ENCODE measurements at regions of chr3 and their contacts with region 1.

Region 1: GRCh38 chr3:112437146-112438022 is 61.9 kb downstream of the BTLA start:
- DNase-seq: no peak
- ATAC-seq: no peak

Region 2: DNA sequence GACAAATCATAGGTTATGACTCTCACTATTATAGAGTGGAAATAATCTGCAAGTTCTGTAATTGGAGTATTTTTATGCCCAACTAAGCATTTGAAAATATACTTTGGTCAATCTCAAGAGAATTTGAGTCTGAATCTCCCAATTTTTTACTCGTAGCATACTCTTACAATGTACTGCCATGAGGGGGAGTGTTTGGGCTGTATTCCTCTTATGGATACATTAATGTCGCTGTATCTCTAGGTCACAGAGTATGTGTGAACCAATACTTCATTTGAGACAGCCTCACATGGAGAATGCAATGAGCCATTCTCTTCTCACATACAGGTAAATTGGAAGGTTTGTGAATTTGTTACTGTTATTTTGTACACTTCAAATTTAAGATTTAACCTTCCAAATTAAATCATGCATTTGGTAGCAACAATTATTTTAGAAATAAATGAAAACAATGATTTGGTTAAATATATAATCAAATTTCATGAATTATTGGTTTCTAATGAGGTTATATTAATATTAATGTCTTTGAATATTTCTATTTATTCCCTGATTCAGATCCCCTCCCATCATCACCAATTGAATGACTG is 109.9 kb before region 1 on chr3:
- intact Hi-C with region 1: loop called (anchors 10 kb)
- DNase-seq: no peak
- ATAC-seq: peak; percentile 78

Region 3: DNA sequence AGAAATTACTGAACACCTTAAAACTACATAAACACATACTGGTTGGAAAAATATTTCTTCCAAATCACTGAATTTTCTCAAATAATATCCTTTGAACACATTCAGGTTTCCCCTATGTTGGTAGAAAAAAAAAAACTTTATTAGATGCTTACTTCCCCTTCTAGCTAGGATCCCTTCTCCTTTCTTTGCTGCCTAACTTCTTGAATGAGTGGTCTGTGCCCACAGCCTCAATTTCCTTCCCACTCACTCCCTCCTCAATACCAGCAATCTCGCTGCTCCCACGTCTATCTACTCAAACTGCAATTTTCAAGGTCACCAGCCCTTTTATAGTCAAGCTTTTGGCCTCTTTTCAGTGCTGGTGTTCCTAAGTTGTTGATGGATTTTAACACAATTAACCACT is 529.2 kb after region 1 on chr3:
- intact Hi-C with region 1: no loop called
- DNase-seq: no peak
- ATAC-seq: no peak

Measured in Right ventricle myocardium inferior (tissue), 1 donor.